ENCODE measurements at regions of chr17 and their contacts with region 1.

Region 1: GRCh38 chr17:75978938-75979704 is at the starts of genes ACOX1 and TEN1:
- DNase-seq: peak; percentile 97 to 98
- ATAC-seq: peak; percentile 94
- H3K4me3 ChIP-seq: peak within 1 kb of the TSS; percentile 81 to 99 (median 92)
- H3K27ac ChIP-seq: peak within 1 kb of the TSS; percentile 96 to 99 (median 98)
- H3K4me1 ChIP-seq: peaks cover 44 to 45% of the 10 kb centered on the region in 2 donors
- H3K27me3 ChIP-seq: no peaks in the 10 kb centered on the region
- CTCF ChIP-seq: peak; percentile 32 to 60 (median 45)
- POLR2A ChIP-seq: peak; percentile 82 to 91
- total RNA-seq, gene ACOX1: 64.8 to 96.6 (median 80.7) TPM
- total RNA-seq, gene TEN1: 4.2 to 9.2 (median 6.8) TPM

Region 2: GRCh38 chr17:75773808-75774470 is 205.2 kb before region 1 on chr17:
- in situ Hi-C with region 1: no loop called
- intact Hi-C with region 1: no loop called
- DNase-seq: no peak
- ATAC-seq: no peak
- H3K4me3 ChIP-seq: no peak overlapping the region
- H3K27ac ChIP-seq: peak overlapping the region; percentile 81 to 98 (median 94)
- H3K4me1 ChIP-seq: peaks cover 49 to 58% of the 10 kb centered on the region in 2 donors
- H3K27me3 ChIP-seq: no peaks in the 10 kb centered on the region
- CTCF ChIP-seq: no peak
- POLR2A ChIP-seq: no peak

Region 3: GRCh38 chr17:75855310-75856081 is 123.6 kb before region 1 on chr17 and contains the start of gene WBP2:
- in situ Hi-C with region 1: no loop called
- intact Hi-C with region 1: loop called (anchors 5 kb)
- DNase-seq: peak; percentile 100
- ATAC-seq: peak; percentile 79 to 80
- H3K4me3 ChIP-seq: peak within 1 kb of the TSS; percentile 63 to 85 (median 78)
- H3K27ac ChIP-seq: peak within 1 kb of the TSS; percentile 95 to 99 (median 96)
- H3K4me1 ChIP-seq: peaks cover 39 to 40% of the 10 kb centered on the region in 2 donors
- H3K27me3 ChIP-seq: no peaks in the 10 kb centered on the region
- CTCF ChIP-seq: peak; percentile 54 to 79 (median 61)
- POLR2A ChIP-seq: peak; percentile 96 to 100
- total RNA-seq, gene WBP2: 129 to 259 (median 148) TPM

Region 4: GRCh38 chr17:75904749-75905521 is 74.2 kb before region 1 on chr17 and contains the start of gene MRPL38:
- in situ Hi-C with region 1: no loop called
- intact Hi-C with region 1: loop called (anchors 1 kb)
- DNase-seq: peak; percentile 85 to 94
- ATAC-seq: peak; percentile 89 to 91
- H3K4me3 ChIP-seq: peak within 1 kb of the TSS; percentile 66 to 95 (median 83)
- H3K27ac ChIP-seq: peak within 1 kb of the TSS; percentile 92 to 95 (median 94)
- H3K4me1 ChIP-seq: peaks cover 12 to 21% of the 10 kb centered on the region in 2 donors
- H3K27me3 ChIP-seq: no peaks in the 10 kb centered on the region
- CTCF ChIP-seq: peak in 4 of 5 experiments; percentile 97 to 100 (median 100)
- POLR2A ChIP-seq: peak; percentile 66 to 67
- total RNA-seq, gene MRPL38: 29.9 to 86.7 (median 53.1) TPM

Region 5: DNA sequence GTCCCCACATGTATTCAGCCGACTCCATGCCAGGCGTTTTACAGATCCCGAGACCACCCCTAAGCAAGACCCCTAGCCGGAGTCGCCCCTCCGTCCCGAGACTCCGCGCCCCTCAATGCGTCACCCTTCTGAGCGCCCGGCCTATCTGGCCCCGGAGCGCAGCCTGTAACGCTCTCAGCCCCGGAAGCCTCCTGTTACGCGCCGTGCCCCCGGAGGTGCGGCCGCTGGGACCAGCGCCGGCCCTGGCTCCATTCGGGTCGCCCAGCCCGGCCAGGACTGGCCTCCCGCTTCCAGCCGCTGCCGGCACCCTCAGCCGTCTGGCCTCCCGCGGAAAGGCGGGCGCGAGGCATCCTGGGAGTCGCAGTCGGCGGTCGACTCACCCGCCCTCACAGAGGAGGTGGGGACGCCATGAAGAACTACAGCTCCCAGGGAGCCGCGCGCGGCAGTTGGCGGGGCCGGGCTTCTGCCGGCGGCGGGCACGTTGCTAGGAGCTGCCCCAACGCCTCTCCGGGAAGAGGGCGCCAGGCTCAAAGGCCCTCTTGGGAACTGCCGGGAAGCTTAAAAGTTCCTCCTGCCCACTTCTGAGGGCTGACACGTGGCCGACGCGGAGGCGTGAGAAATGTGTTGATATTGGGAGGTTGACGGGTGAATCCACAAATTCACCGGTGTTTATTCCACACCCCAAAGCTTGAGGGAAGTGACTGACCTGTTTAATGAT is 38.2 kb before region 1 on chr17 and contains the start of gene FBF1:
- in situ Hi-C with region 1: no loop called
- intact Hi-C with region 1: loop called (anchors 2 kb)
- DNase-seq: peak; percentile 90 to 93
- ATAC-seq: peak; percentile 92 to 97
- H3K4me3 ChIP-seq: peak within 1 kb of the TSS; percentile 72 to 99 (median 86)
- H3K27ac ChIP-seq: peak within 1 kb of the TSS; percentile 66 to 88 (median 78)
- H3K4me1 ChIP-seq: peaks cover 11 to 30% of the 10 kb centered on the region in 2 donors
- H3K27me3 ChIP-seq: no peaks in the 10 kb centered on the region
- CTCF ChIP-seq: peak in 2 of 5 experiments; percentile 15 to 18
- POLR2A ChIP-seq: peak; percentile 66 to 68
- total RNA-seq, gene FBF1: 2.5 to 6.4 (median 5.8) TPM

Region 6: GRCh38 chr17:75959839-75960511 is 19.1 kb before region 1 on chr17:
- in situ Hi-C with region 1: no loop called
- intact Hi-C with region 1: no loop called
- DNase-seq: no peak
- ATAC-seq: no peak
- H3K4me3 ChIP-seq: no peak overlapping the region
- H3K27ac ChIP-seq: no peak overlapping the region
- H3K4me1 ChIP-seq: no peaks in the 10 kb centered on the region
- H3K27me3 ChIP-seq: no peaks in the 10 kb centered on the region
- CTCF ChIP-seq: no peak
- POLR2A ChIP-seq: no peak

Region 7: DNA sequence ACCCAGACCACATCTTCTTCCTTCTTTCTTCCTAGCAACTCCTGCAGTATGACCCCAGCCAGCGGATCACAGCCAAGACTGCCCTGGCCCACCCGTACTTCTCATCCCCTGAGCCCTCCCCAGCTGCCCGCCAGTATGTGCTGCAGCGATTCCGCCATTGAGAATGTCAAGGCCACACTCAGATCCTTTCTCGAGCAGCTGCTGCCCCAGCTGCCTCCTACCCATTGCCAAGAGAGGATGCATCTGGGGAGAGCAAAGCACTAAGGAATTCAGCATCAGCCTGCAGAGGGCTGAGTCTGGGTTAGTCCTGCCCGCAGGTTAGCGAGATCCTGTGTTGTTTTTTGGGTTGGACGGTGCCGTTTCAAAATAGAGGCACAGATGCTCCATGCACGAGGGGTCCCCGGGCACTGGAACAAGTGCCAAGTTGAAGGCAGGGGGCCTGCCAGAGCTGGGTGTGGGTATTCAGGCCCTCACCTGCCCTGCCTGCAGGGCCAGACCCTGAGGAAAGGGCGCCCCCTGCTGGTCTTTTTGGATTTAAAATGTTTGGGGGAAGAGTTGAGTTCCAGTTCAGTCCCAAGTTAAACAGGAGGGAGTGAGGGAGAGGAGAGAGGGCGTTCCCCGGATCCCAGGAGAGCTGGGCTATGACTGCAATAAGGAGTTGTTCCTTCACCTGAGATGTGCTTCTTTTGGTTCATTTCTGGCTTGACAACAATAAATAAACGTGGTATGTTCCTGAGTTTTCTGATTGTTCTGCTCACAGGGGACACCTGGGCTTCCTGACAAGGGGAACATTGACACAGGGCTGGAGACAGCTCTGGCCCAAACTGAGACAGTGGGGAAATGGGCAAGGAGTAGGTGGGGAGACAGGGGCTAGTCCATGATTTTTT is 26.4 kb after region 1 on chr17:
- in situ Hi-C with region 1: no loop called
- intact Hi-C with region 1: loop called (anchors 1 kb)
- DNase-seq: peak; percentile 51 to 67
- ATAC-seq: peak; percentile 65 to 79
- H3K4me3 ChIP-seq: no peak overlapping the region
- H3K27ac ChIP-seq: peak overlapping the region in 1 of 4 donors; percentile 36
- H3K4me1 ChIP-seq: peaks cover 13 to 16% of the 10 kb centered on the region in 2 donors
- H3K27me3 ChIP-seq: no peaks in the 10 kb centered on the region
- CTCF ChIP-seq: peak; percentile 72 to 88 (median 81)
- POLR2A ChIP-seq: no peak

Region 8: DNA sequence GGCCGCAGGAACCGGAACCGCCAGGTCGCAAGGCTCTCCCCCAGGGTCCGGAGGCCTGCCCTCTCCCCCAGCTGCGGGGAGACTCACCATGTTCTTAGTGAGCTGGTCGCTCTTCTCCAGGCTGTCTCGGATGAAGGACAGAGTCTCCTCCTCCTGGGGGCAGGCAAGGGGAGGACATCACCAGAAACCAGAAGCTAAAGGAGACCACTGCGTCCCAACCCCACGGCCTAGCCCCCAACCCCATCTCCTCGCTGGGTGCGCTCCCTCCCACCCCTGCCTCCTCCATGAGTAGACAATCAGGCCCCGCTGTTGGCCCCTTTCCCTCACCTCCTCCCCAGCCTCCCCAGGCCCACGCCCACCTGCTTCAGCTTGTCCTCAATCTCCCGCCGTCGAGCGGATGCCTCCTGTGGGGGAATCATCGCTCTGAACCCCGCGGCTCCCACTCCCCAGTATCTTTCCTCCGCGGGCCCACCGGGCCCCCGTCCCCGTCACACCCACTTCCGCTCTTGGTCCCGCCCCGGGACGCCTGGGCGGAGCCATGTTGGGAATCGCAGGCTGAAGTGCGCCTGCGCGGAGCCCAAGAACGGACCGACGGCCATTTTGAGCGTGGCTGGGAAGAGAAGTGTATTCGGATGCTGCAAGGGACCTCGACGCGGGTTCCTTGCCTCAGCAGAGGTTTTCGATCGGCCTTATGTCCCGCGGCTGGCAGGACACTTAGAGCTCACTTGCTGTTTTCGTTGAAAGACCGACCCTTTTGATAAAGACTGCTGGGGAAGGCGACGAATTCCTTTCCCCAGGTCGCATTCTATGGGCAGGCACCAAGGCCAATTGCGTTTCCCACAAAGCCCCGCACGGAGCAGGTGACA is 124.4 kb after region 1 on chr17 and contains the start of gene EXOC7:
- in situ Hi-C with region 1: no loop called
- intact Hi-C with region 1: loop called (anchors 5 kb)
- DNase-seq: peak; percentile 81 to 87
- ATAC-seq: peak; percentile 94 to 95
- H3K4me3 ChIP-seq: peak within 1 kb of the TSS; percentile 84 to 94 (median 89)
- H3K27ac ChIP-seq: peak within 1 kb of the TSS; percentile 79 to 93 (median 84)
- H3K4me1 ChIP-seq: peaks cover 13 to 18% of the 10 kb centered on the region in 2 donors
- H3K27me3 ChIP-seq: no peaks in the 10 kb centered on the region
- CTCF ChIP-seq: no peak
- POLR2A ChIP-seq: peak; percentile 47 to 64
- total RNA-seq, gene EXOC7: 49.5 to 70.7 (median 53.9) TPM

Region 9: DNA sequence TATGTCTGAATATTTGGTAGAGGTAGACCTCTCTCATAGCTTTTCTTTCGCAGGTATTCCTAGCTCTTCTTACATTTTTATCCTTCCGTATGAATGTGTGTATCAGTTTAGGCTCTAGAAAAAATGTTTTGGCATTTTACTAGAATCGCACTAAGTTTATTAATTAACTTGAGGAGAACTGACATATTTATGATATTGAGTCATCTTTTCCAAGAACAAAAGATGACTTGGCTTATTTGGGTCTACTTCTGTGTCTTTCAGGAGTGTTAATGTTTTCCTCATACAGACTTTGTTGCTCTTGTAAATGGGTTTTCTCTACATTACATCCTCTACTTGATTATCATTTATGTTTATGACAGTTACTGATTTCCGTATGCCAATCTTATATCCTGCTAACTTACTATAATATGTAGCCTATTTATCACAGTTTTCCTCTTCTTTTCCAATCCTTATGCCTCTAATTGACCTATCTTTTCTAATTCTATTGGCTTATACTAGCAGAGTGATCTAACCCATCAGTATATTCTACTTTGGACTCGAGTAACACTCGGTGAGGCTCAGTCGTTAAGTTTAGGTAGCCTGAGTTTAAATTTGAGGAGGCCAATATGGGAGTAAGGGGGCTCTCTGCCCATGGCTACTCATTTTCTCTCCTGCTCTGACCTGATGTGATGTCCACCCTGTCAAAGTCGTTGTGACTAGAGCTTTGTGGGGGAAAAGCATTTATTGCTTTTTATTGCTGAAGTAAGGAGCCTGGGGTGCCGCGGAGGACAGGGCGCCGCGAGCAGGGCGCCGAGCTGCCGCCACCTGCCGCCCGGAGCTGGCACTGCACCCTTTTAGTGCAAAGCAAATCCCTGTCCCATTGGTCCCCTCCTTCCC is 644.4 kb after region 1 on chr17:
- in situ Hi-C with region 1: no loop called
- intact Hi-C with region 1: no loop called
- DNase-seq: peak; percentile 37 to 56
- ATAC-seq: peak; percentile 85 to 94
- H3K4me3 ChIP-seq: no peak overlapping the region
- H3K27ac ChIP-seq: no peak overlapping the region
- H3K4me1 ChIP-seq: no peaks in the 10 kb centered on the region
- H3K27me3 ChIP-seq: no peaks in the 10 kb centered on the region
- CTCF ChIP-seq: peak; percentile 78 to 97 (median 86)
- POLR2A ChIP-seq: no peak

Measured in gastrocnemius medialis (tissue), 4 donors.